Activated CD4-positive, alpha-beta T cell treated with anti-CD3 and anti-CD28 coated beads, Interleukin-2, amount 10 ng/mL, durations not matched to agents 7 days and 5 days (primary cell): ENCODE measurements at regions of chr2 and their contacts with region 1.

Region 1: GRCh38 chr2:181128199-181128598 is 147.8 kb downstream of the UBE2E3 start:
- DNase-seq: no peak
- H3K4me3 Mint-ChIP-seq: no peak overlapping the region
- H3K27ac Mint-ChIP-seq: peak overlapping the region; percentile 51
- H3K4me1 Mint-ChIP-seq: peaks cover 71% of the 10 kb centered on the region
- H3K27me3 Mint-ChIP-seq: no peaks in the 10 kb centered on the region

Region 2: DNA sequence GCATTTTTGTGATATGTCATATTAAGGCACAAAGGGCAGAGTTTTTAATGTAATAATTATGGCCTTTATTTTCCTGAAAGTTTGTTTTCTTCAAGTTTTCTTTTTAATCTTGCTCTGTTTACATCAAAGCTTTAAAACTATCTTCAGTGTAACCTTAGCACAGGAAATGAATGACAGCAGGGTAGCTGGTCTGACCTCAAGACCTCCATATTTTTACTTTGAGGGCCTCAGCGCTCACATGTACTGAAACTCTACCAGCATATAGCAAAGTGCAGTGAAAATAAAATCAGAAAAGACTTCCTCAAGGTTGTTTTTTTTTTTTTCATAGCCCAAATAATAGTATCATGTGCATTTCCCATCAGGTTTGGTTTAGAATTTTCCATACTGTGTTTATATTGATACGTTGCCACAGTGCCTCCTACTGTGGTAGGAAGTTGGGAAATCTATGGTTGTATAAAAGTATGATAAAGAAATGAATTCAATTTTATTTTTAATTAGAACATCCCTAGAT is 15.6 kb after region 1 on chr2:
- CTCF ChIA-PET with region 1: interaction called, 12 read pairs
- POLR2A ChIA-PET with region 1: interaction called, 4 read pairs
- DNase-seq: peak; percentile 36
- H3K4me3 Mint-ChIP-seq: no peak overlapping the region
- H3K27ac Mint-ChIP-seq: peak overlapping the region; percentile 85
- H3K4me1 Mint-ChIP-seq: peaks cover 67% of the 10 kb centered on the region
- H3K27me3 Mint-ChIP-seq: no peaks in the 10 kb centered on the region

Region 3: DNA sequence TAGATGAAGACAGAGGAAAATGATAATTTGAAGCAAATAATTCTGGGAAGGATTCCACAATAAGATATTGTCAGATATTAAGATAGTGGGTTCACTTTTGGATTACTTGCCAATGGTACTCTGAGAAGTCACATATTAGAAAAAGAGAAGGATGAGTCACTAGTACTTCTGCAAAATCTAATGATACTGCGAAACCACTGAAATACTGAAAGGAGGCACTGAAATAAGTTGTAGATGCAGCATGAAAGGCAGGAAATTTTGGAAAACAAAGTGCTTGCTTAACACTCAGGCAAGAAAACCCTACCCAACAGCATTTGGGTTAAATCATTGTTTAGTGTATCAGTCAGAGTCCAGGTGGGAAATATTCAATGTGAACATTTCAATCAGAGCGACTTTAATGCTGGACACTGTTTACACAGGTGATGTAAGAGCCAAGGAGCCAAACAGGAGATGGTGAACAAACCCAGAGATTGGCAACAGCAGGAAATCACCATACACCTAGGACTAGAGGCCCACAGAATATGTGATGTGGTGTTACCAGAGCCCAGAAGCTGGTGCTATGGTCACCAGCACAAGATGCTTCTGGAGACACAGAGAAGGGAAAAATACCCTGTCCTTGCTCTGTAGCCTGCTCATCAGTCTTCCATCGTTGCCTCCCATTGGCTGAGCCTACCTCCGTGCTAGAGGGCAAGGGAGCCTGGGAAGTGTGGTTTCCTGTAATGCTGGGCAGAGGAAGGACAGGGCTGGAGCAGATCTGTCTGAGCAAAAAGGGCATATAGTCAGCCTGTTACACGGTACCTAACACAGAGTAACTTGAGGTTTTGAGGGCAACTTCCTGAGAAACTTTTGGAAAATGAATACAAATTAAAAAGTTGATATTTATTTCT is 124.3 kb after region 1 on chr2:
- CTCF ChIA-PET with region 1: no interaction called
- POLR2A ChIA-PET with region 1: no interaction called
- DNase-seq: no peak
- H3K4me3 Mint-ChIP-seq: no peak overlapping the region
- H3K27ac Mint-ChIP-seq: no peak overlapping the region
- H3K4me1 Mint-ChIP-seq: peaks cover 16% of the 10 kb centered on the region
- H3K27me3 Mint-ChIP-seq: no peaks in the 10 kb centered on the region